ENCODE measurements at regions of chr4 and their contacts with region 1.

Region 1: GRCh38 chr4:13548984-13549546 is 4.8 kb upstream of the NKX3-2 start:
- DNase-seq: peak; percentile 79
- ATAC-seq: peak; percentile 58
- H3K4me3 ChIP-seq: peak overlapping the region; percentile 36 to 59
- H3K27ac ChIP-seq: no peak overlapping the region
- H3K4me1 ChIP-seq: peaks cover 8 to 31% of the 10 kb centered on the region in 2 experiments
- H3K27me3 ChIP-seq: no peaks in the 10 kb centered on the region
- CTCF ChIP-seq: peak; percentile 75 to 92 (median 77)
- POLR2A ChIP-seq: no peak
- RAD21 ChIP-seq: peak; percentile 97

Region 2: DNA sequence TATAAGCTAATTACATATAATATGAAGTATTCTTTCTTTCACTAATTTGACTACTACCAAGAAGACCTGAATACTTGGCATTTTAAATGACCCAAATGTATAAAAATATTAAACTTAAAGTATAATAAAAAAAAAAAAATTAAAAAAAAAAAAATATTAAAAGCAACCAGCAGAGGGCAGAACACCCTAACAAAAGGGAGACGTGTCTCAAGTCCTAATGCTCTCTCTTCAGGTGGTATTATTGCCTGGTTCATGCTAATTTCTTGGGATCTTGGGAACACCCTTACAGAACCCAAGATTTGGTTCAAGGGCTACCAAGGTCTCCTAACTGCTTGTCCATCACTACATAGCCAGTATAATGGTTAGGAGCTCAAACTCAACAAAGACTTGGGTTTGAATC is 819.7 kb before region 1 on chr4:
- CTCF ChIA-PET with region 1: no interaction called
- POLR2A ChIA-PET with region 1: no interaction called
- RAD21 ChIA-PET with region 1: no interaction called
- intact Hi-C with region 1: loop called (anchors 1 kb)
- DNase-seq: peak; percentile 33
- ATAC-seq: peak; percentile 57; the same call in 1 of the 2 replicates
- H3K4me3 ChIP-seq: no peak overlapping the region
- H3K27ac ChIP-seq: no peak overlapping the region
- H3K4me1 ChIP-seq: no peaks in the 10 kb centered on the region
- H3K27me3 ChIP-seq: no peaks in the 10 kb centered on the region
- CTCF ChIP-seq: peak; percentile 9 to 39 (median 21); a peak in 2 of 6 replicates
- POLR2A ChIP-seq: no peak
- RAD21 ChIP-seq: peak; percentile 62

Region 3: GRCh38 chr4:12844141-12844540 is 704.9 kb before region 1 on chr4:
- CTCF ChIA-PET with region 1: interaction called, 4 read pairs
- POLR2A ChIA-PET with region 1: no interaction called
- RAD21 ChIA-PET with region 1: no interaction called
- intact Hi-C with region 1: loop called (anchors 2 kb)
- DNase-seq: no peak
- ATAC-seq: no peak
- H3K4me3 ChIP-seq: no peak overlapping the region
- H3K27ac ChIP-seq: no peak overlapping the region
- H3K4me1 ChIP-seq: no peaks in the 10 kb centered on the region
- H3K27me3 ChIP-seq: no peaks in the 10 kb centered on the region
- CTCF ChIP-seq: no peak
- POLR2A ChIP-seq: no peak
- RAD21 ChIP-seq: no peak

Region 4: DNA sequence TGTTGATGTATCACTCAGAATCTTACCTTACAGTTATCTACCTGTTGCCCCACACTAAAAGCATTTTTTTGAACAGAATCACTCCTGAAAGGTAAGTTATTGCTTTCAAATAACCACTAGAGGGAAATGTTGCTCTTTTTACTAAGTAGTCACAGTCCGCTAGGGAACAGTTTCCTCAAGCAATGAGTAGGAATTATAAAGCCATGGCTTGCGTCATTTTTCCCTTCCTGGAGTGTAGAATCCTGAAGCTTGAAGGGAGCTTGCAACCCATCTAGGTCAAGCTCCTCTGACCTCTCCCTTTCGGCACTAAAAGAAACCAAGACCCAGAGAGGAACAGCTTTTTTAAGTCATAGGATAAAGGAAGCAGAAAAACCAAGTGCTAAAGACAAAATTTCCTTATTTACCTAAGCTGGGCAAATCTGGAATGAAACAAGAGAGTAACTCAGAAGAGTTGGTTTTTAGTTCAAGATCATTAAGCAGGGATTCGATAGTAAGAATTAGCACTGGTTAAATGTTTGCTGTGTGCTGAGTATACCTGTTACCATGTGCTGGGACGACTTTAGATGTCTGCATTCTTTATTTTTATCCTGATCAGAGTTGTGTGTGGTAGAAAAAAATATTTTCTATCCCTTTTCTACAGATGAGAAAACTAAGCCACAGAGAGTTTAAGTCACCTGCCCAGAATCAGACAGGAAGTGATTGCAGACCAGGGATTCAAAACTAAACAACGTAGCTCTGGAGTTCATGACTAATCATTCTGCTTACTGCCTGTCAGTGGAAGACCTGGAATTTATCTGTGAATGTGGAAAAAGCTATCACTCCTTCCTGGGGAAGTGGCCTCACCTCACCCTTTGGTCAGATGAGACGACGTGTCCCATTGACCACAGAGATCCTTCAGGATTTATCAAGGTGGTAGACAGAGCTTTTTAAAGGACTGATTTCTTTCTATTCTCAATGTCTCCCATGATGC is 696.4 kb before region 1 on chr4:
- CTCF ChIA-PET with region 1: interaction called, 10 read pairs
- POLR2A ChIA-PET with region 1: no interaction called
- RAD21 ChIA-PET with region 1: interaction called, 3 to 5 read pairs
- intact Hi-C with region 1: loop called (anchors 1 kb)
- DNase-seq: peak; percentile 63
- ATAC-seq: peak; percentile 97
- H3K4me3 ChIP-seq: no peak overlapping the region
- H3K27ac ChIP-seq: no peak overlapping the region
- H3K4me1 ChIP-seq: peaks cover 0 to 4% of the 10 kb centered on the region in 2 experiments; a peak in 1 of 4 replicates
- H3K27me3 ChIP-seq: 0 out of 2 replicates have a peak, but pooled peaks cover 9% of the 10 kb centered on the region
- CTCF ChIP-seq: peak; percentile 54 to 68 (median 68); a peak in 5 of 6 replicates
- POLR2A ChIP-seq: no peak
- RAD21 ChIP-seq: peak; percentile 89

Region 5: GRCh38 chr4:13403833-13404232 is 145.2 kb before region 1 on chr4:
- CTCF ChIA-PET with region 1: interaction called, 3 read pairs
- POLR2A ChIA-PET with region 1: no interaction called
- RAD21 ChIA-PET with region 1: no interaction called
- intact Hi-C with region 1: loop called (anchors 10 kb)
- DNase-seq: no peak
- ATAC-seq: no peak
- H3K4me3 ChIP-seq: no peak overlapping the region
- H3K27ac ChIP-seq: no peak overlapping the region
- H3K4me1 ChIP-seq: no peaks in the 10 kb centered on the region
- H3K27me3 ChIP-seq: no peaks in the 10 kb centered on the region
- CTCF ChIP-seq: no peak
- POLR2A ChIP-seq: no peak
- RAD21 ChIP-seq: no peak